PC-3 (cell line): ENCODE measurements at regions of chr14 and their contacts with region 1.

Region 1: DNA sequence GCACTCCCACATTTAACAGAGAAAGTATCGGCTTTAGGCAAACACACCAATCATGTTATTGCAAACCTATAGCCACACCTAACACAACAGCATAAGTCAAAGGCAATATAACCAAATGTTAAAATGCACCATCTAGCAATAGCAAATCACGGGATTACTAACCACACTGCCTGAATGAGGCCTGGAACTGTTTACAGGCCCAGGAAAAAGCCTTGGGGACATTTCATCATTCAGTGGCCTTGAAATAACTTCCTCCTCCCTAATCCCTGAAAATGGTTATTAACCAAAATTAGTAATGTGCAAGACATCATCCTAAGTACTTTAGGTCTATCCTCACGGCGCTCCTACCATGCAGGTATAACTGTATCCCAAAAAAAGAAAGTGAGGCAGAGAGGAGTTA is 2.3 kb downstream of the GALC start:
- DNase-seq: no peak
- ATAC-seq: no peak
- H3K4me3 ChIP-seq: no peak overlapping the region
- H3K27ac ChIP-seq: no peak overlapping the region
- H3K4me1 ChIP-seq: no peaks in the 10 kb centered on the region
- H3K27me3 ChIP-seq: no peaks in the 10 kb centered on the region
- CTCF ChIP-seq: no peak

Region 2: GRCh38 chr14:88044851-88045339 is 54.2 kb after region 1 on chr14:
- CTCF ChIA-PET with region 1: no interaction called
- POLR2A ChIA-PET with region 1: no interaction called
- intact Hi-C with region 1: loop called (anchors 2 kb)
- DNase-seq: peak; percentile 64
- ATAC-seq: peak; percentile 52
- H3K4me3 ChIP-seq: no peak overlapping the region
- H3K27ac ChIP-seq: peak overlapping the region; percentile 98
- H3K4me1 ChIP-seq: peaks cover 48% of the 10 kb centered on the region
- H3K27me3 ChIP-seq: no peaks in the 10 kb centered on the region
- CTCF ChIP-seq: no peak